Activated naive CD4-positive, alpha-beta T cell treated with anti-CD3 and anti-CD28 coated beads for 36 hours (primary cell): ENCODE measurements at regions of chr16 and their contacts with region 1.

Region 1: GRCh38 chr16:96935-97381 is 18.9 kb downstream of the MPG start:
- DNase-seq: peak; percentile 93
- H3K4me3 Mint-ChIP-seq: no peak overlapping the region
- H3K27ac Mint-ChIP-seq: no peak overlapping the region
- H3K4me1 Mint-ChIP-seq: peaks cover 5% of the 10 kb centered on the region
- H3K27me3 Mint-ChIP-seq: no peaks in the 10 kb centered on the region

Region 2: GRCh38 chr16:53346-54236 is 43.4 kb before region 1 on chr16 and contains the starts of genes POLR3K and SNRNP25:
- CTCF ChIA-PET with region 1: interaction called, 14 read pairs
- intact Hi-C with region 1: loop called (anchors 1 kb)
- DNase-seq: peak; percentile 99
- H3K4me3 Mint-ChIP-seq: peak within 1 kb of the TSS; percentile 94
- H3K27ac Mint-ChIP-seq: peak within 1 kb of the TSS; percentile 91
- H3K4me1 Mint-ChIP-seq: peaks cover 31% of the 10 kb centered on the region
- H3K27me3 Mint-ChIP-seq: no peaks in the 10 kb centered on the region
- total RNA-seq, gene POLR3K: 38.2 to 40.9 TPM
- total RNA-seq, gene SNRNP25: 38.0 to 38.6 TPM

Region 3: DNA sequence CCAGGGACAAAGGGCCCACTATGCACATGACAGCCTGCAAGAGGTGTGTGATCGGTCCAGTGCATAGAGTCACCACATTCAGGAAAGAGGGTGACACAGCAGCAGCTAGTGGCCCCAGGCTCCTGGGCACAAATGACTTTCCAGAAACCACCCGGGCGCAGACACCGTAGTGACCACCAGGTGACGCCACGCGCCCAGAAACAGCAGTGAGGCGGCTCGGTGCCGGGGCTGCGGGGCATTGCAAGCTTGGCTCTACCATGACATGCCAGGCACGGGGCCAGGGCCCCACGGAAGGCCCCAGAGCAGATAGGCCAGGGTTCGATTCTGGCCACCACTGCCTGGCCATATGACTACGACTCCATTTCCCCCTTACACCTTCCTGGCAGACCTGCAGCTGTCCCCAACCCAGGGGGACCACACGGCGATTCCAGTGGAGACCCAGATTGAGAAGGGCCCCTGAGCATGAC is 31.3 kb before region 1 on chr16:
- CTCF ChIA-PET with region 1: interaction called, 216 read pairs
- intact Hi-C with region 1: loop called (anchors 1 kb)
- DNase-seq: peak; percentile 93
- H3K4me3 Mint-ChIP-seq: no peak overlapping the region
- H3K27ac Mint-ChIP-seq: no peak overlapping the region
- H3K4me1 Mint-ChIP-seq: peaks cover 4% of the 10 kb centered on the region
- H3K27me3 Mint-ChIP-seq: peaks cover 12% of the 10 kb centered on the region

Region 4: DNA sequence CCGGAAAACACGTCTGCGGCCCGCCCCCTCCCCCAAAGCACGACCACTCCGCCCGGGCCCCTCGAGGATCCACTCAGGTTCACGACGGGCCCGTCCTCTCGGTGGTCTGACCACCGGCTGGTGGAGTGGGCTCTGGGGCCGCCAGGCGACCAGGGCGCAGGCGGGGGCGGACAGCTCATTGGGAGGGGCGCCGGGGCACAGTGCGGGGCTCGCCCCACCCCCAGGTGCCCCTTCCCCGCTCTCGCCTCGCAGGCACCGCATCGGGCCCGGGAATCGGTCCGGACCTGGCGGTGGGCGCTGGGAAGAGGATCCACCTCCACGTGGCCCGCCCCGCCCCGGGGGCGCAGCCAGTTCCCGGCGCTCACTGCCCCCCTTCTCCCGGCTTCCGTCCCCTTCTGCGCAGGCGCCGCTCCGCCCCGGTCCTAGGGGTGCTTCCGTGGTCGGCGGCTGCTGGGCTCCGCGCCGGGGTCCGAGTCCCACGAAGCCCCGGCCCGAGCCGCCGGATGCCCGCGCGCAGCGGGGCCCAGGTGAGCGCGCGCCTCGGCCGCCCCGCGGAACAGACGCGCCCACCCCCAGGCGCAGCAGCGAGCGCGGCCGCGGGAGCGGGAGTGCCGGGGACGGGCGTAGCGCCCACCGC is 19.0 kb before region 1 on chr16 and contains the start of gene MPG:
- CTCF ChIA-PET with region 1: interaction called, 19 read pairs
- intact Hi-C with region 1: no loop called
- DNase-seq: peak; percentile 82
- H3K4me3 Mint-ChIP-seq: peak within 1 kb of the TSS; percentile 80
- H3K27ac Mint-ChIP-seq: peak within 1 kb of the TSS; percentile 80
- H3K4me1 Mint-ChIP-seq: peaks cover 21% of the 10 kb centered on the region
- H3K27me3 Mint-ChIP-seq: peaks cover 8% of the 10 kb centered on the region
- total RNA-seq, gene MPG: 38.6 to 38.8 TPM

Region 5: DNA sequence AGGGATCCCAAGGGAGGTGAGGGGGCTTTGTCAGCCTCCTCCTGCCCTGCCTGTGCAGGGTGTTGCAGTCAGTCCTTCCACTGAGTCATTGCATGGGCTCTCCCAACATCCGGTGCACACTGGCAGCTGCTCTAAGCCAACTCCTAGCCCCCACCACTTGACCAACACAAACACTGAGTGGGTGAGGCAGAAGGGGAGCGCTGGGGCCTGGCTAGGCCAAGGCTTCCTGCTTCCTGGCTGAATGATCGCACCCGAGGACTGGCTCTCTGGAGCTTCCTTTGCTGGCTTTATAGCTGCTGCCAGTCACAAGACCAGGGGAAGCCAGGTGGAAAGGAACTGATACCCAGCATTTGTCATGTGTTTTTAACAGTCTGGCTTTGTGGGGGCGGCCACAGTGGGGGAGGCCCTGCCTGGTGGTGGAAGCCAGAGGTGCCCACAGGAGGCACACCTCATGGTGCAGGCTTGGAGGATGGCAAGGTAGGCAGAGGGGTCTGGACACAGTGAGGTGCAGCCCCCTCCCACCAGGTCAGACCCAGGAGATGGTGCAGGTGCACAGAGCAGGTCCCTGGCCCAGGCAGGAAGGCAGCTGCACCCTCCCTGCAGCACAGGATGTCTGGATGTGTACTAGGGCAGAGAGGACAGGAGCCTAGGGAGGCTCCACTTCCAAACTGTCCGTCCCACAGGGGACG is 12.1 kb before region 1 on chr16:
- CTCF ChIA-PET with region 1: interaction called, 44 read pairs
- intact Hi-C with region 1: no loop called
- DNase-seq: peak; percentile 84
- H3K4me3 Mint-ChIP-seq: peak overlapping the region; percentile 21
- H3K27ac Mint-ChIP-seq: peak overlapping the region; percentile 79
- H3K4me1 Mint-ChIP-seq: peaks cover 28% of the 10 kb centered on the region
- H3K27me3 Mint-ChIP-seq: no peaks in the 10 kb centered on the region

Region 6: DNA sequence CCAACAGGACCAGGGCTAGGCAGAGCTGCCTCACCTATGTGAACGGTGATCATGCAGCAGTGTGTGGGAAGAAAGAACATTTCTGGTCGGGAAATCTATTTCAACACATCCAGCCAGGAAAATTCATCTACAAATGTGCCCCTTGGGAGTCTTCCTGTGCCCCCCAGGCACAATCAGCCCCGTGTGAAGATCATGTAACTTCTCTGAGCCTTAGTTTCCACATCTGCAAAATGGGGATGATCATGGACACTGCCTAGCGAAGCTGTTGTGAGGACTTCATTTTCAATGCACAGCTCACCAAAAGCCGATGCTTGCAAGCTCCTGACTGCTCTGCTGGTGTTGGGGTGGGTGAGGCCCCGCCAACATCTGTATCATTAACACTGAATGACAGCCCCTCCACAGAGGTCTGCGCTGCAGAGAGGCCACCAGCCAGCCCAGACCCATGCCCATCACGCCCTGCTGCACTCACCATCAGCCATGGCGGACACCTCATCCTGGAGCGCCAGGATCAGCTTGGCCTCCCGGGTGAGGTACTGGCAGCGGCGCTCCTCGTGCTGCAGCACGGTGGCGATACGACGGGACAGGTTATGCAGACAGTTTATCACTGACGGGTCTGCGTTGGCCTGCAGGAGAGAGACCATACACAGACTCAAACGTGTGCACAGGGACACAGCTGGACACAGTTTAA is 15.3 kb after region 1 on chr16:
- CTCF ChIA-PET with region 1: interaction called, 23 read pairs
- intact Hi-C with region 1: no loop called
- DNase-seq: no peak
- H3K4me3 Mint-ChIP-seq: no peak overlapping the region
- H3K27ac Mint-ChIP-seq: no peak overlapping the region
- H3K4me1 Mint-ChIP-seq: peaks cover 6% of the 10 kb centered on the region
- H3K27me3 Mint-ChIP-seq: no peaks in the 10 kb centered on the region

Region 7: DNA sequence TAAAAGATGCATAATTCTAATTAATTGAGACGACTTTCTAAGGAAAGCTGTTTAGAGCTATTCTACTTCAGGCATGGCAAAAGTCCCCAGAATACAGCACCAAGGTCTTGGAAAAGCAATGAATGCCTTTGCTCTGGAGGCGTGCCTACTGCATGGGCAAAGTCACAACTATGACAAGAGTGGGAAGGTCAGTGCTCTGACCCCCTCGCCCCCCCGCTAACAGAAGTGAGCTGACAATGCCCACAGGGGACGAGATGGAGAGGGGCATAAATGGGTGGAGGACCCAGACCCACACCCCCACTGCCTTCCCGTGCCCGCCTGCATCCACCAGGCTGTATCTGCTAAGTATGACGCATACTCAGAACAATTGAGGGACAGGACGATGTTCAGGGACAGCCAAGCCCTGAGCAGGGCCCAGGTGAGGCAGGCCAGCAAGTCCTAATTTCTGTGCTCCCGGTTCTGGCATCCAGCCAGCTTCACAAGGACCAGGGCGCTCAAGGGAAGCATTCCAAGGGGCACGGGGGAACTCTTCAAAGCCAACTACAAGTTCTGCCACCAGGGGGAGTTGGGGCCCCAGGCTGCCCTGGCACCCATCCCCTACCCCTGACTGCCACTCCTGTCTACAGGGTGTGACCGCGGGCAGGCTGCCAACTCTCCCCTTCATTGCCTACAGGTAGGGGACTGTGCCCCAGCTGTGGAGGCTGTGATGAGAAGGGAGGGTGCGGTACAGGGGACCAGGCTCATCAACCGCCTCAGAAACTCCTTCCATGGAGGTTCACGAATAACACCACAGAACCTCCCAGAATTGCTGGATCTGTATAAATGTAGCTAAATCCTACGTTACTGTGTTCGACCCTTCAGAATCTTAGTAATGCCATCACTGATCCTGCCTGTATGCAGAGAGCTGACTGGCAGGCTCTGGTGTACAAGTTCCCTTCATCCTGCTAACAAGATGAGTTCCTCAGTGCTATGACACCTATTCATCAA is 20.7 kb after region 1 on chr16:
- CTCF ChIA-PET with region 1: interaction called, 15 read pairs
- intact Hi-C with region 1: no loop called
- DNase-seq: peak; percentile 58
- H3K4me3 Mint-ChIP-seq: no peak overlapping the region
- H3K27ac Mint-ChIP-seq: no peak overlapping the region
- H3K4me1 Mint-ChIP-seq: peaks cover 6% of the 10 kb centered on the region
- H3K27me3 Mint-ChIP-seq: no peaks in the 10 kb centered on the region

Region 8: GRCh38 chr16:318628-319027 is 221.7 kb after region 1 on chr16:
- CTCF ChIA-PET with region 1: no interaction called
- intact Hi-C with region 1: no loop called
- DNase-seq: peak; percentile 39
- H3K4me3 Mint-ChIP-seq: no peak overlapping the region
- H3K27ac Mint-ChIP-seq: no peak overlapping the region
- H3K4me1 Mint-ChIP-seq: peaks cover 46% of the 10 kb centered on the region
- H3K27me3 Mint-ChIP-seq: no peaks in the 10 kb centered on the region